Activated CD4-positive, alpha-beta T cell treated with anti-CD3 and anti-CD28 coated beads for 36 hours (primary cell): ENCODE measurements at regions of chr5 and their contacts with region 1.

Region 1: GRCh38 chr5:43191740-43192557 is at the start of gene NIM1K:
- DNase-seq: peak; percentile 65
- ATAC-seq: peak; percentile 32
- H3K4me3 Mint-ChIP-seq: peak within 1 kb of the TSS; percentile 79
- H3K27ac Mint-ChIP-seq: peak within 1 kb of the TSS; percentile 73
- H3K4me1 Mint-ChIP-seq: peaks cover 32% of the 10 kb centered on the region
- H3K27me3 Mint-ChIP-seq: peaks cover 16% of the 10 kb centered on the region
- total RNA-seq, gene NIM1K: 2.1 to 2.3 TPM

Region 2: GRCh38 chr5:42908509-42909488 is 283.1 kb before region 1 on chr5:
- CTCF ChIA-PET with region 1: interaction called, 3 read pairs
- POLR2A ChIA-PET with region 1: no interaction called
- intact Hi-C with region 1: loop called in 1 of 2 experiments (anchors 2 kb)
- DNase-seq: peak; percentile 95
- ATAC-seq: peak; percentile 95
- H3K4me3 Mint-ChIP-seq: peak overlapping the region; percentile 75
- H3K27ac Mint-ChIP-seq: peak overlapping the region; percentile 48
- H3K4me1 Mint-ChIP-seq: peaks cover 14% of the 10 kb centered on the region
- H3K27me3 Mint-ChIP-seq: peaks cover 8% of the 10 kb centered on the region

Region 3: GRCh38 chr5:43008369-43009153 is 183.4 kb before region 1 on chr5:
- CTCF ChIA-PET with region 1: no interaction called
- POLR2A ChIA-PET with region 1: no interaction called
- intact Hi-C with region 1: loop called in 1 of 2 experiments (anchors 1 kb)
- DNase-seq: peak; percentile 94
- ATAC-seq: peak; percentile 64
- H3K4me3 Mint-ChIP-seq: peak overlapping the region; percentile 76
- H3K27ac Mint-ChIP-seq: peak overlapping the region; percentile 94
- H3K4me1 Mint-ChIP-seq: peaks cover 21% of the 10 kb centered on the region
- H3K27me3 Mint-ChIP-seq: no peaks in the 10 kb centered on the region

Region 4: DNA sequence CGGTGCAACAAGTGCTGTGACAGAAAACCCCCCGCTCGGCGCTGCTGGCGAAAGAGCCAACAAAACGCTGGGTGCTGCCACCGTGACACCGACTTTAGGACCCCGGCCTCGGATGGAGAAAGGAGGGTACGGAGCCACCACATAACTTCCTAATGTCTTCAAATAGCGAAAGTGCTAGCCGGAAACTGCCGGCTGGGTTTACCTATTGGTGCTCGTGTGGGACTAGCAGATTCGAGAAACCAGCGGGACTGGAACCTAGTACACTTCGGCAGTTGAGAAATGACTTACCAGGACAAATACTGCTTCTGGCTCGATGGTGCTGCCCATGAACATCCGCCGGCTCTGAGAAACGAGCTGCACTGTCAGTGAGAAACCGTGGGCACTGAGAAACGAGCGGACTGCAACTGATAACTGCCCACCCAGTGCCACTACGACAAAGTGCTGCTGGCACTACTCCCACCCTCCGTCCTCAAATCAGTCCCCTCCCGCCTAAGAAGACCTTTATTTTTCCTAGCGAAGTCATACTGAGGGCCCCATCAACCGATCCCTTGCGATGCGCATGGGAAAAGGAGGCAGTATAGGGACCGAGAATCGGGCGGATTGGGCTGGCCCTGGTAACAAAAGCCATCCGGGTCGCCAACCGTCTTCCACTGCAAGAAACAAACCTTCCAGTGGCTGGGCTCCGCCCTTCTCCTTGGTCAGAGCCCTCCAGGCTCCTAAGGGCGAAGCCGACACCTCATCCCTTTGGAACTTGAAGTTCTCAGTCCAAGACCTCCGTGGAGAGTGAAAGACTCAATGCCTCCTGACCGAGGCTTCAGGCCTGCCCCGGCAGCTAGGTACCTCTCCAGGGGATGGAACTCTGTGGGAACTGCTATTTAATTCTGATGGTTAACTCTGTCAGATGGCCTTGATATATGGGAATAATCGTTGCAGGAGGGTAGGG is 124.9 kb before region 1 on chr5:
- CTCF ChIA-PET with region 1: no interaction called
- POLR2A ChIA-PET with region 1: no interaction called
- intact Hi-C with region 1: loop called (anchors 2 to 5 kb)
- DNase-seq: peak; percentile 91
- ATAC-seq: peak; percentile 51
- H3K4me3 Mint-ChIP-seq: peak overlapping the region; percentile 97
- H3K27ac Mint-ChIP-seq: peak overlapping the region; percentile 99
- H3K4me1 Mint-ChIP-seq: peaks cover 37% of the 10 kb centered on the region
- H3K27me3 Mint-ChIP-seq: no peaks in the 10 kb centered on the region

Region 5: DNA sequence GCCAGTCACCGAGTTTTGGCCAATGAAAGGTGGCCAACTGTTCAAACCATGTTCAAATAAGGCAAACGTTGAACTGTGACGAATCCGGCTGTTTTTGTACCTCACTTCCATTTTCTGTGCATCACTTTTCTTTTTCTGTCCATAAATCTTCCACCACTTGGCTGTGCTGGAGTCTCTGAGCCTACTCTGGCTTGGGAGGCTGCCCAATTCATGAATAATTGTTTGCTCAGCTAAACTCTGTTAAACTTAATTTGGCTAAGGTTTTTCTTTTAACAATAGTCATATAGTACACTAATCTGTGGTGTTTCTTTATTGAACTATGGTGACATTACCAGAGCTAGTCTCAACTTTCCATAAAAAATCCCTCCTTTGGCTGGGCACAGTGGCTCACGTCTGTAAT is 11.4 kb after region 1 on chr5:
- CTCF ChIA-PET with region 1: no interaction called
- POLR2A ChIA-PET with region 1: no interaction called
- intact Hi-C with region 1: no loop called
- DNase-seq: no peak
- ATAC-seq: no peak
- H3K4me3 Mint-ChIP-seq: no peak overlapping the region
- H3K27ac Mint-ChIP-seq: no peak overlapping the region
- H3K4me1 Mint-ChIP-seq: no peaks in the 10 kb centered on the region
- H3K27me3 Mint-ChIP-seq: peaks cover 9% of the 10 kb centered on the region

Region 6: GRCh38 chr5:43281840-43282658 is 90.1 kb after region 1 on chr5:
- CTCF ChIA-PET with region 1: interaction called, 3 read pairs
- POLR2A ChIA-PET with region 1: interaction called, 3 read pairs
- intact Hi-C with region 1: loop called in 1 of 2 experiments (anchors 1 kb)
- DNase-seq: peak; percentile 43
- ATAC-seq: peak; percentile 81
- H3K4me3 Mint-ChIP-seq: no peak overlapping the region
- H3K27ac Mint-ChIP-seq: no peak overlapping the region
- H3K4me1 Mint-ChIP-seq: peaks cover 11% of the 10 kb centered on the region
- H3K27me3 Mint-ChIP-seq: peaks cover 4% of the 10 kb centered on the region

Region 7: GRCh38 chr5:43514816-43515677 is 323.1 kb after region 1 on chr5 and contains the start of gene C5orf34:
- CTCF ChIA-PET with region 1: no interaction called
- POLR2A ChIA-PET with region 1: no interaction called
- intact Hi-C with region 1: loop called in 1 of 2 experiments (anchors 1 kb)
- DNase-seq: peak; percentile 97
- ATAC-seq: peak; percentile 93
- H3K4me3 Mint-ChIP-seq: peak within 1 kb of the TSS; percentile 89
- H3K27ac Mint-ChIP-seq: peak within 1 kb of the TSS; percentile 99
- H3K4me1 Mint-ChIP-seq: peaks cover 23% of the 10 kb centered on the region
- H3K27me3 Mint-ChIP-seq: no peaks in the 10 kb centered on the region
- total RNA-seq, gene C5orf34: 14.4 to 16.8 TPM

Region 8: DNA sequence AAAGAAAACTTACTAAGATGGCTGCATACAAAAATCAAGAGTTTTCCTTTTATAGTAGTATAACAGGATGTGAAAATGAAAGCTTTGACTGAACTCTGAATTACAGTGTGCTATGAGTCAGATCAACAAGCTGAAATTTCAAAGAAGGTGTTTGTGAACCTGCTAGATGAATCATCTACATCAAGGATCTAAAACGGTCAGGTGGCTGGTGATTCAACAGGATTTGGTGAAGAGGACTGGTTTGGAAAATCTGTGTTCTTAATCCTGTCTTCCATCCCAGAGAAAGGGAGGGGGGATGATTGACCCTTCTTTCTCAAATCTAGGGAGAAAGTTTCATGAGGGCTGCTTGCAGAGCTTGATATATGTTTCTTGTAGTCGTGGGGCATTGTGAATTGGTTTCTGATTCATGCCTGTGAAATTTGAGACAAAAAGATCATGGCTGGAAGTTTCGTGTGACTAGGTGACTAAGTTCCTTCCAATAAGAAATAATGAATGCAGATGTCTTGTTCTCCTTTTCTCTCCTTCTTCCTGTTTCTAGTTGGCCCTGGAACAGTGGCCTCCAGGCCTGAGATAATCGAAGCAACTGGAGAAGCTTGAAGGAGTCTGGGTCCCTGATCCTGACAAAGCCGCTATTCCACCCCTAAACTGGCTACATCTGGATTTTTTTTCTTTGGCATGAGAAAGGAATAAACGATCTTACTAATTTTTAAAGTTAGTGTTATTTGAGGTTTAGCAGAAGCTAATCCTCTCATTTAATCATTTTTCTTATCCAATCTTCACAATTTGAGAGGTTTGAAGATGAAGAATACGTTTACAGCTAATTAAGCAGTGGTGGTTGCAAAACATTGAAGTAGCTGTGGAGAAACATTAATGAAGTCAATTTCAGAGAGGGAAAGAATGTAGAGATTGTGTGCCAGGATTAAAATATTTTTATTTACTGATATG is 1684.0 kb after region 1 on chr5:
- CTCF ChIA-PET with region 1: no interaction called
- POLR2A ChIA-PET with region 1: no interaction called
- intact Hi-C with region 1: loop called in 1 of 2 experiments (anchors 10 kb)
- DNase-seq: peak; percentile 49
- ATAC-seq: peak; percentile 99
- H3K4me3 Mint-ChIP-seq: no peak overlapping the region
- H3K27ac Mint-ChIP-seq: peak overlapping the region; percentile 89
- H3K4me1 Mint-ChIP-seq: peaks cover 23% of the 10 kb centered on the region
- H3K27me3 Mint-ChIP-seq: no peaks in the 10 kb centered on the region